BJ (cell line): ENCODE measurements at regions of chr4 and their contacts with region 1.

Region 1: GRCh38 chr4:20700007-20700761 is at the start of gene PACRGL:
- DNase-seq: peak; percentile 61
- H3K4me3 ChIP-seq: peak within 1 kb of the TSS; percentile 59
- H3K27me3 ChIP-seq: no peaks in the 10 kb centered on the region
- CTCF ChIP-seq: no peak
- polyA plus RNA-seq, gene PACRGL: 6.6 and 13.8 TPM in 2 replicates

Region 2: DNA sequence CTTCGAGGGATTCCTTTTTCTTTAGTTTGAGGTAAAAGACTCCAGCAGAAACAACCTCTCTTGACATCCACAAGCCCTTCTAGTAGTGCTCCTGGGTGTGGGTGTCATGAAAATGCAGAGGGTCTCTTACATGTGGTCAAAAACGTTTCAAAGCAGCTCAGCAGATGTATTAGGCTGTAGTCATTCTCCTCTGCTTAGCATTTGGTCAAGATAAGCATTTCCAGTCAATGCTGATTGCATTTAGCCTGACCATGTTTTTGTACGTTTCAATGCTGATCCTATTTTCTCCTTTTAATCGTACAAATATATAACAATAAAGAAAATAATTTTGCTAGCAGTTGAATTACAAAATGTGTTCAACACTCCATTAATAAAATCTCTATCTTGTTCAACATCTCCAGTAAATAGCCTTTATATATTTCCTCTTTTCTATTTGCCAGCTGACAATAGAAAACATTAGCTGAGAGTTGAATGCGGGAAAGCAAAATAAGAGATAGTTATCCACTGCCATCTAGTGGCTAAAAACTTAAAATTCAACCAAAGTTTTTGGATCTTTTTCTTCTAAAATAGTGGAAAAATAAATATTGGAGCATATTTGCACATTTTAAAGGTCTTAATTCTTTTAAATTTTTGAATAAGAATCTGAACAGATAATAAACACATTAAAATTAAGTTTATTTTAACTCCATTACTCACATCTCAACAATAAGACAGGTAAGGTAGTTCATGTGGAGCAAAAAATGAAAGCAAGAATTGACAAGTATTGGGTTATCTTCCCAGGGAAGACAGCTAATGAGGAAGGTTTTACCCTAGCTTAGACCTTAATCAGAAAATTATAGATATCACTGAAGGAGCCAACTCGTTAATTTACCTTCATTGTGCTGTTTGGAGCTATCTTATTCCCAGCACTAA is 15.1 kb before region 1 on chr4:
- CTCF ChIA-PET with region 1: interaction called, 10 read pairs
- POLR2A ChIA-PET with region 1: no interaction called
- DNase-seq: no peak
- H3K4me3 ChIP-seq: no peak overlapping the region
- H3K27me3 ChIP-seq: peaks cover 2% of the 10 kb centered on the region
- CTCF ChIP-seq: peak; percentile 47